ENCODE measurements at regions of chr16 and their contacts with region 1.

Region 1: DNA sequence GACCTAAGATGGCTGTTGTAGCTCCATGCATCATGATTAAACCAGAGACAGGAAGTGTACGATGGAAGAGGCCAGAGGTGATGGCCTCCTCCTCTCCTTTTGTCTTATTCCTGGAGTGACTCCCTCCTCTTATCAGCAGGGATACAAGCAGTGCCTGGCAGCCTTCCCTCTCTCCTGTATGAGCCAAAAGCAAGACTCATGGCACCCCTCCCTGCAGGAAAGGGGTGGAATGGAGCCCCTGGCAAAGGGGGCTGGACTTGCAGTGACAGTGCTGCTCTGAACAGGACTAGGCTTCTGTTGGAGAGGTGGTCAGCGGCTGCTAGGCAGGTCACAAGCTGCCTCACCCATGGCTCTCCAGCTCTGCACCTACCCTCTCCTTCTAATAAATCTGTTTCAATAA is 8.4 kb downstream of the TXNL4B start:
- DNase-seq: peak; percentile 41 to 91 (median 73)
- ATAC-seq: peak; percentile 89 to 95 (median 94)
- H3K4me3 ChIP-seq: no peak overlapping the region
- H3K27ac ChIP-seq: peak overlapping the region in 9 of 12 donors; percentile 8 to 76 (median 48)
- H3K4me1 ChIP-seq: peaks cover 0 to 10% (median 0%) of the 10 kb centered on the region in 12 donors
- H3K27me3 ChIP-seq: no peaks in the 10 kb centered on the region
- CTCF ChIP-seq: no peak
- POLR2A ChIP-seq: no peak

Region 2: GRCh38 chr16:72021043-72021442 is 64.0 kb before region 1 on chr16:
- intact Hi-C with region 1: loop called in 1 of 10 experiments (anchors 5 kb)
- DNase-seq: peak in 1 of 5 donors; percentile 57
- ATAC-seq: no peak
- H3K4me3 ChIP-seq: no peak overlapping the region
- H3K27ac ChIP-seq: no peak overlapping the region
- H3K4me1 ChIP-seq: peaks cover 0 to 4% (median 0%) of the 10 kb centered on the region in 12 donors
- H3K27me3 ChIP-seq: no peaks in the 10 kb centered on the region
- CTCF ChIP-seq: peak in 4 of 12 donors; percentile 6 to 19 (median 12)
- POLR2A ChIP-seq: no peak

Region 3: GRCh38 chr16:72142476-72142875 is 57.5 kb after region 1 on chr16:
- intact Hi-C with region 1: no loop called
- DNase-seq: no peak
- ATAC-seq: no peak
- H3K4me3 ChIP-seq: no peak overlapping the region
- H3K27ac ChIP-seq: no peak overlapping the region
- H3K4me1 ChIP-seq: no peaks in the 10 kb centered on the region
- H3K27me3 ChIP-seq: peaks cover 0 to 6% (median 0%) of the 10 kb centered on the region in 9 donors
- CTCF ChIP-seq: no peak
- POLR2A ChIP-seq: no peak

Measured in heart left ventricle (tissue), 16 donors.